ENCODE measurements at regions of chr14 and their contacts with region 1.

Region 1: DNA sequence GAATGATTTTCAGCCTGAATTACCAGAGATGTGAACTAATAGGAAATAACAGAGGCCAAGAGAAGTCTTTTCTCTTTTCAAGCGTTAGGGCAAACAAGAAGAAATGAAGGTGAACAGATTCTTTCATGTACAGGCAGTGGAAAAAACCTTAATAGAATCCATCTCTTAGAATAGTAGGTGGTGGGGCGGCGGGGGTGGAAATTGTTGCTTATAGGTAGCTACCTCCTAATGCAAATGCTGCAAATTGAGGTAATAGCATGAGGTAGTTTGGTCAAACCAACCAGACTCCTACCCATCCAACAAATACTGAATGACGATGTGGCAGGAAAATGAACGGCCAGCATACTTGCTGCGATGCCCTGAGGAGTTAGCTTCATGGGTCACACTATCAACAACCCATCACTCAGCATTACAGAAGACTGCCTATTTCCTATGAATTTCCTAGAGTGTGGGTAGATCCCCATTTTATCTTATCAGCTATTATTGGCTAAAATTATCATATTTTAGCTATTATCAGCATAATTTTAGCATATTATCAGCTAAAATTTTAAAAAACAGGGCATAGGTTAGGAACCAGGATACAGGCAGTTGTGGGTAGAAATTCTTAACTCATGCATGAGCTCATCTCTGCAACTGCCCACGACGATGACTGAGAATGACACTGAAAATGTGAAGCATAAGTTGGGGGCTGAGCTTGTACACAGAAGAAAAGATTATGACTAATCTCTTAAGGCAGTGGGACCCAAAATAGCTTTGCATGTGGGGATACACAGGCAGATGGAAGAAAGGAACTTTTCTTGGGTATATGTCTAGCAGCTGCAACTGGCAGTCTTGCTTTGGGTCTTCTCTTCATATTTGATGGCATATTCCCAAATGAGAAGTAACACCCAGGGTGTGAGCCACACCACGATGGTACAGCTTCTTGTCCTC is 68.7 kb downstream of the NIN start:
- DNase-seq: peak; percentile 94
- ATAC-seq: peak; percentile 91
- H3K4me3 ChIP-seq: no peak overlapping the region
- H3K27ac ChIP-seq: no peak overlapping the region; the same call in 1 of the 2 replicates
- H3K4me1 ChIP-seq: peaks cover 14% of the 10 kb centered on the region
- H3K27me3 ChIP-seq: no peaks in the 10 kb centered on the region
- CTCF ChIP-seq: no peak
- POLR2A ChIP-seq: no peak
- RAD21 ChIP-seq: no peak

Region 2: GRCh38 chr14:50512463-50512862 is 249.8 kb before region 1 on chr14:
- CTCF ChIA-PET with region 1: no interaction called
- POLR2A ChIA-PET with region 1: no interaction called
- dilution Hi-C with region 1: no loop called
- in situ Hi-C with region 1: no loop called
- intact Hi-C with region 1: no loop called
- DNase-seq: no peak
- ATAC-seq: no peak
- H3K4me3 ChIP-seq: no peak overlapping the region
- H3K27ac ChIP-seq: no peak overlapping the region
- H3K4me1 ChIP-seq: no peaks in the 10 kb centered on the region
- H3K27me3 ChIP-seq: no peaks in the 10 kb centered on the region
- CTCF ChIP-seq: no peak
- POLR2A ChIP-seq: no peak
- RAD21 ChIP-seq: no peak

Region 3: GRCh38 chr14:50726372-50727107 is 35.7 kb before region 1 on chr14:
- CTCF ChIA-PET with region 1: no interaction called
- POLR2A ChIA-PET with region 1: no interaction called
- dilution Hi-C with region 1: no loop called
- in situ Hi-C with region 1: no loop called
- intact Hi-C with region 1: loop called (anchors 1 kb)
- DNase-seq: peak; percentile 89
- ATAC-seq: peak; percentile 84
- H3K4me3 ChIP-seq: no peak overlapping the region
- H3K27ac ChIP-seq: peak overlapping the region; percentile 24; the same call in 1 of the 2 replicates
- H3K4me1 ChIP-seq: peaks cover 14% of the 10 kb centered on the region
- H3K27me3 ChIP-seq: no peaks in the 10 kb centered on the region
- CTCF ChIP-seq: no peak
- POLR2A ChIP-seq: no peak
- RAD21 ChIP-seq: no peak

Region 4: GRCh38 chr14:50943943-50944646 is 181.8 kb after region 1 on chr14 and contains the start of gene PYGL:
- CTCF ChIA-PET with region 1: no interaction called
- POLR2A ChIA-PET with region 1: interaction called, 10 read pairs
- dilution Hi-C with region 1: no loop called
- in situ Hi-C with region 1: no loop called
- intact Hi-C with region 1: no loop called
- DNase-seq: peak; percentile 49
- ATAC-seq: peak; percentile 91
- H3K4me3 ChIP-seq: peak within 1 kb of the TSS; percentile 96
- H3K27ac ChIP-seq: peak within 1 kb of the TSS; percentile 47
- H3K4me1 ChIP-seq: peaks cover 9% of the 10 kb centered on the region; the same call in 1 of the 2 replicates
- H3K27me3 ChIP-seq: no peaks in the 10 kb centered on the region
- CTCF ChIP-seq: no peak
- POLR2A ChIP-seq: peak; percentile 49
- RAD21 ChIP-seq: no peak
- total RNA-seq, gene PYGL: 70.4 and 73.0 TPM in 2 replicates

Region 5: GRCh38 chr14:51472881-51473280 is 710.6 kb after region 1 on chr14:
- CTCF ChIA-PET with region 1: no interaction called
- POLR2A ChIA-PET with region 1: no interaction called
- dilution Hi-C with region 1: no loop called
- in situ Hi-C with region 1: no loop called
- intact Hi-C with region 1: no loop called
- DNase-seq: no peak
- ATAC-seq: no peak
- H3K4me3 ChIP-seq: no peak overlapping the region
- H3K27ac ChIP-seq: no peak overlapping the region
- H3K4me1 ChIP-seq: peaks cover 10% of the 10 kb centered on the region; the same call in 1 of the 2 replicates
- H3K27me3 ChIP-seq: no peaks in the 10 kb centered on the region
- CTCF ChIP-seq: no peak
- POLR2A ChIP-seq: no peak
- RAD21 ChIP-seq: no peak

Measured in IMR-90 (cell line).